ENCODE measurements at regions of chr1 and their contacts with region 1.

Region 1: GRCh38 chr1:32151319-32151787 is 28.1 kb upstream of the TXLNA start:
- DNase-seq: no peak
- H3K4me3 ChIP-seq: no peak overlapping the region
- H3K27ac ChIP-seq: peak overlapping the region in 12 of 59 donors; percentile 6 to 59 (median 24)
- H3K27me3 ChIP-seq: no peaks in the 10 kb centered on the region
- CTCF ChIP-seq: no peak

Region 2: GRCh38 chr1:32172621-32173245 is 21.4 kb after region 1 on chr1:
- intact Hi-C with region 1: loop called in 1 of 2 experiments (anchors 1 kb)
- DNase-seq: no peak
- H3K4me3 ChIP-seq: no peak overlapping the region
- H3K27ac ChIP-seq: no peak overlapping the region
- H3K27me3 ChIP-seq: no peaks in the 10 kb centered on the region
- CTCF ChIP-seq: no peak

Measured in dorsolateral prefrontal cortex (tissue), 120 donors.